ENCODE measurements at regions of chr7 and their contacts with region 1.

Region 1: DNA sequence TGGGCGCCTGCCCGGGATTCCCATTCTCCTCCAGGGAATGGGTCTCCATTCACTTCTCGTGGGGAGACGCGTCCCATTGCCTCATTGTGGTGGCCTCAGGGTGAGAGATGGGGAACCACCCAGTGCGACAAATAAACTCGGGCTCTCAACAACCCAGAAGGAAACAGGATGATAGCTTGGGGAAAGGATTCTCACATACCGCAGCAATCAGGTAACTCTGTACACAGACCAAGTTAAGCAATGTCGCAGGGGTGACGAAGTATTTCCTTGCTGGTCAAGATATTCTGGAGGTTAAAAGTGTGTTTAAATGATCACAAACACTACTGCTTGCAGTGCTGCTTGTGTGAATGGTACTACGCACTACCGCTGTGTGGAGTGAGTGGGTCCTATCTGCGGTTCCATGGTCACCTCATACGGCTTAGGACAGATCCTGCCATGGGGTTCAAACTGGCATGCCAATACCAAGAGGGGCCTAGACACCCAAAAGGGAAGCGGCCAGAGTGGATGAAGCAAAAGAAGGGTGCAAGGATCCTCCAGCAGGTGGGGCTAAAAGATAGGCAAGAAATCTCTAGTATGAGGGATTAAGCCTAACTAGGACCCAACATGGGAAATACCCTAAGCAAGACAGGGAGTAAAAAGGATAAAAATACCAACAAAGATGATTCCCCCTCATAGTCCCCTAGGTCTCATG is 143.8 kb upstream of the TMEM106B start:
- DNase-seq: peak; percentile 89
- H3K4me3 Mint-ChIP-seq: peak overlapping the region; percentile 46
- H3K27ac Mint-ChIP-seq: peak overlapping the region; percentile 98
- H3K4me1 Mint-ChIP-seq: peaks cover 40% of the 10 kb centered on the region
- H3K27me3 Mint-ChIP-seq: no peaks in the 10 kb centered on the region
- CTCF ChIP-seq: peak; percentile 85

Region 2: DNA sequence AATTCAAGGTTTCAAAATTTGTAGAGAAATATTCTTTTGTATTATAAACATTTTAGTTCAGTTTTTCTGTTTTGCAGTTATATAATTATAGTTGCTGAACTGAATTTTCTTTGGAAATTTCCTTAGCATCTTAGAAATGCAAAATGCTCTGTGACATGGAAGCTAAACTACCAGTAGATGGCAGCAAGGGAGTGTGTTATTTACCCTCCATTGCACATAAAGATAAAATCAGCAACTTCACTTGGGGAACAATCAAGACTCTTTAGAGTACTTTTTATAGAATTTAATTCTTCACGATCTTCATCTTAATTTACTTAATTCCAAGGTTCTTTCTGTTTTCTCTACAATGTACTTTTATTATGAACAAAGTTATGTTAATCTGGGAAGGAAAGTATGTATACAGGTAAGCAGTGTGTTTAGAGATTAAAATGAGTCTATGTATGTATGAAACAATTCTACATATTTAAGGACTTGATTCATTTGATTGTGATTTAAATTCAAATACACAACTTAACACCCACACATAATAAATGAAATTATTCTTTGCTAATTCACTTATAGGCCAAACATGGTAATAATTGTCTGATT is 639.5 kb before region 1 on chr7:
- CTCF ChIA-PET with region 1: no interaction called
- intact Hi-C with region 1: loop called (anchors 1 kb)
- DNase-seq: peak; percentile 30
- H3K4me3 Mint-ChIP-seq: no peak overlapping the region
- H3K27ac Mint-ChIP-seq: no peak overlapping the region
- H3K4me1 Mint-ChIP-seq: no peaks in the 10 kb centered on the region
- H3K27me3 Mint-ChIP-seq: no peaks in the 10 kb centered on the region
- CTCF ChIP-seq: peak; percentile 65

Region 3: GRCh38 chr7:11831736-11832495 is 235.4 kb before region 1 on chr7 and contains the start of gene THSD7A:
- CTCF ChIA-PET with region 1: interaction called, 4 read pairs
- intact Hi-C with region 1: loop called (anchors 1 kb)
- DNase-seq: peak; percentile 81
- H3K4me3 Mint-ChIP-seq: peak within 1 kb of the TSS; percentile 88
- H3K27ac Mint-ChIP-seq: peak within 1 kb of the TSS; percentile 67
- H3K4me1 Mint-ChIP-seq: peaks cover 17% of the 10 kb centered on the region
- H3K27me3 Mint-ChIP-seq: no peaks in the 10 kb centered on the region
- CTCF ChIP-seq: peak; percentile 50
- total RNA-seq, gene THSD7A: 5.9 and 8.3 TPM in 2 replicates

Region 4: DNA sequence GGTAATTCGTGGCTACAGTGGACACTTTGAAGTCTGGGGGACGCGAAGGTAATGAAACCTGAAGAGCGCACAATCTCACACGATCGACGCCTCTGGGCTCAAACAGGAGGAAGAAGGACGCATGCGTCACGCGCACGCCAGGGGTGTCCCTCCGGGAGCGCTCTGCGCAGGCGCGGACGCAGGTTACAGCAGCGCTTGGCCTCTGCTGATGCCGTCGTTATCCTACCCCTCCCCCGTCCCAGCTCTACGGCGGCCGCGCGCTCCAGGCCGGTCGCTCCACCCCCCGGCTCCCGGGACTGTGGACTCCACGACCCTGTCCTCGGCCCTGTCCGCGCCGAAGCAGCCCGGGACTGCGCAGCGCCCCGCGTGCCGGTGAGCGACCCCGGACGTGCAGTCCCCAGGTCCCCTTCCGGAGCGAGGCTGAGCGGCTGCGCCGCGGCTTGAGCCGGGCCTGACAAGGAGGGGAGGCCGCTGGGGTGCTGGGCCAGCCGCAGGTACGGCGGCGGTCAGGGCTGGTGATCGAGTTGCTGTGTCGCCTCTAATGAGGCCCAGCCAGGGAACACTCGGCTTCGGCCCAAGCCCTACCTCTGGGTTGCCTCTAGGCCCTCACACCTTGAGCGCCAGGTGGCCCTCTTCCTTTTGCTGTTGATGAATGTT is 143.9 kb after region 1 on chr7 and contains the start of gene TMEM106B:
- CTCF ChIA-PET with region 1: interaction called, 5 read pairs
- intact Hi-C with region 1: loop called (anchors 2 kb)
- DNase-seq: peak; percentile 99
- H3K4me3 Mint-ChIP-seq: peak within 1 kb of the TSS; percentile 85
- H3K27ac Mint-ChIP-seq: peak within 1 kb of the TSS; percentile 93
- H3K4me1 Mint-ChIP-seq: peaks cover 27% of the 10 kb centered on the region
- H3K27me3 Mint-ChIP-seq: no peaks in the 10 kb centered on the region
- CTCF ChIP-seq: no peak
- total RNA-seq, gene TMEM106B: 76.7 and 81.5 TPM in 2 replicates

Region 5: GRCh38 chr7:12322284-12322902 is 255.1 kb after region 1 on chr7:
- CTCF ChIA-PET with region 1: interaction called, 11 read pairs
- intact Hi-C with region 1: loop called (anchors 1 kb)
- DNase-seq: peak; percentile 21
- H3K4me3 Mint-ChIP-seq: no peak overlapping the region
- H3K27ac Mint-ChIP-seq: no peak overlapping the region
- H3K4me1 Mint-ChIP-seq: peaks cover 11% of the 10 kb centered on the region
- H3K27me3 Mint-ChIP-seq: no peaks in the 10 kb centered on the region
- CTCF ChIP-seq: peak; percentile 74

Measured in Calu3 (cell line).